ENCODE measurements at regions of chr4 and their contacts with region 1.

Region 1: DNA sequence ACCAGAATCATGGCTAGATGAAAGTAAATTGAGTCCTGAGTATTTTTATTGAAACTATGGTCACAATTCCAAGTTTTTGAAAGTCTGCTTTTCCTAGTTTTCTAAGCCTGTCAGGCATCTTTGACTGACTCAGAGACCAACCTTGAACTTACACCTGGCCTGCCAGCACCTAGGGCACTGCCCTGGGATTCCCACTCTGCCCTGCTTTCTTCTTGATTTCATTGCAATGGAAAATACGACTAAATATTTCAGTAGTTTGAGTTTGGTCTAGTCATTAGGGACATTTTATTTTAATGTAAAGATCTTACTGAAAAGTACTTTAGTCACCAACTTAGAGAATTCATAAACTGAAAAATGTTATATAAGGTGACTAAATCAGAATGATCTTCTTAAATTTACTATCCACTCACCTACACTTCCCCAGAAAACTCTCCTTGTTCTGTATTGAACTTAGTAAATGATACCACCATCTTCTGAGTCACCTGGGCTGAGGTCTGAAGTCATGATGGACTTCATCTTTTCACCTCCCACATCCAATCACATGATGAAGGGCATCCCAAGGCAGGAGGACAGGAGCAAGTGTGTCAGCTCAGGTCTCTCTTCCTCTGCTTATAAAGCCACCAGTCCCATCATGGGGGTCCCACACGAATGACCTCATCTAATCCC is 11.6 kb upstream of the PYURF start:
- DNase-seq: no peak
- ATAC-seq: no peak
- H3K4me3 ChIP-seq: no peak overlapping the region
- H3K4me1 ChIP-seq: no peaks in the 10 kb centered on the region
- CTCF ChIP-seq: no peak

Region 2: DNA sequence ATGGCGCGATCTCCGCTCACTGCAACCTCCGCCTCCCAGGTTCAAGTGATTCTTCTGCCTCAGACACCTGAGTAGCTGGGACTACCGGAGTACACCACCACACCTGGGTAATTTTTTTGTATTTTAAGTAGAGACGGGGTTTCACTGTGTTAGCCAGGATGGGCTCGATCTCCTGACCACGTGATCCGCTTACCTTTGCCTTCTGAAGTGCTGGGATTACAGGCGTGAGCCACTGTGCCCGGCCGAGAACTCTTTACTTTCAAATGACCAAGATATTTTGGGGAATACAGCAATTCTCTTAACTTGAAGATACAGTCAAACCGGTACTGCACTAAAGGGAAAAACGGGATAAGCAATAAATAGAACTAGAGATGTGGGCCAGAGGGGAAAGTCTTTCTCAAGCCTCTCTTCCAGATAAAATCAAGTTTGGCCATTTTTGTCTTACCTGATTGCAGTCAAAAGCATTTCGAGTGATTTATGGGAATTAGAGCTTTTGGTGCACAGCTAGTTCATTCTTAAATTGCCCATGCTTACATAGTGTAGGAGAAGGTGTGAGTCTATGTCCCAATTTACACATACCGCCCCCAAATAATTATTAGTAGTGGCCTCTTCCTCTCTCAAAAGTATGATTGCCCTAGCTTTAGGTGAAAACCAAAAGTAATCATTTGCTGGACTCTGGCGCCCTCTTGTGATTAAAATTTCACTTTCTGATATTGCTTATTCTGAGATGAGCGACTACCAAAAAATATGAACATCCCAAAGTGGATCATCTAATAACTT is 323.6 kb before region 1 on chr4:
- intact Hi-C with region 1: no loop called
- DNase-seq: peak in 1 of 3 donors; percentile 83
- ATAC-seq: peak; percentile 56
- H3K4me3 ChIP-seq: no peak overlapping the region
- H3K4me1 ChIP-seq: no peaks in the 10 kb centered on the region
- CTCF ChIP-seq: peak; percentile 37

Region 3: DNA sequence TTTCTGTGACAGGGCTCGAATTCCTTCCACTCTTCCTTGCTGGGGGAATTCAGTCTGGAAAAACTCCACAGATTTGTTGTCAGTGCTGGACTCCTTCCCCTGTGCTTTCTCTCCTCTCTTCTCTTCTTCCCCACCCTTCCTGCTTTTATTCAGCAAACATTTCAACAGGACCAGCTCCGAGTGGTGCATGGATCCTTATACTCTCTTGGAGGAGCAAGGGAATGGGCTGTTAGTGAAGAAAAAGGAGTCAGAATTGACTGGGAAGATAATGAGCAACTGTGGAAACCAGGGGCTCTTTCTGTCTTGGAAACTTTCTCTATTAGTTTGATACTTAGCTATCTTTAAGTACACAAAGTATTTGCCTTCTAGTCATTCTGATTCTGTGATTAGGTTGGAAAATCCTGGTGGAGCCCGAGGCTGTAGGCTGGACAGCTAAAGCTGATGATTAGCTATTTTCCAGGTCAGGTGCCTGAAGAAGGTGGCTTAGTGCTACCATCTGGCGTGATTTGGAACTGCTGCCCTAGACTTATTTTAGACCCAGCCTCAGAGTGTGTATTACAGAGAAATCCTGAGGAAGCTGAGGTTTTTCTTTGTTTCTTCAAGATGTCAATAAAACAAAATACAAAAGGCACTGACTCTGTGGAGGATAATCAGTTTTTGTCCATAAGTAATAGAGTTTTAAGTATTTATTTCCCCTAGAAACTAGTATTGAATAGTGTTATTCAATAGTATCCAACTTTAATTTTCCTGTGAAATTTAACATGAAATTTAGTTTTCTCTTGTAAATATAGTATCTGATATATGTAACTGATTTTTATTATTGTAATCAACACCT is 124.0 kb after region 1 on chr4:
- intact Hi-C with region 1: loop called in 1 of 2 experiments (anchors 5 kb)
- DNase-seq: peak in 1 of 3 donors; percentile 69
- ATAC-seq: peak; percentile 87
- H3K4me3 ChIP-seq: no peak overlapping the region
- H3K4me1 ChIP-seq: no peaks in the 10 kb centered on the region
- CTCF ChIP-seq: peak; percentile 70

Measured in mucosa of descending colon (tissue), 3 donors.